Right cardiac atrium (tissue), 5 donors: ENCODE measurements at regions of chr4 and their contacts with region 1.

Region 1: DNA sequence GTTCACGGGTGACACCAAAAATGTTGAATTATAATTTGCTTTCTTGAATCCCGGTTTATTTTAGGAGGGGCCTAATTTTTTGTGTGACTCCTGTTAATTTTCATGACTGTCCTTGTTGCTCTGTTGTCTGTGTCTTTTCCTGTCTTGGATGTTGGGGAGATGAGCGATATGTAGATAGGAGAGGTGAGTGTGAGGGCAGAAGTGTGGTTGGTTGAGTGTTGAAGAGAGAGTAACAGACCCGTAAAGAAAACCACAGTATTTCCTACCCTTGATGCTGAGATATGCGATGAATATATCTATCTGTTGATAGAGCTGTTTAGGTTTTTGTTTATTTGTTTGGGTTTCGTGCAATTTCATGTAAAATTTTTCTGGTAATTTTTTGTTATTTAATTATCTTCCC is 70.5 kb downstream of the CPE start:
- DNase-seq: no peak
- ATAC-seq: no peak
- H3K4me3 ChIP-seq: no peak overlapping the region
- H3K27ac ChIP-seq: no peak overlapping the region
- H3K4me1 ChIP-seq: no peaks in the 10 kb centered on the region
- H3K27me3 ChIP-seq: no peaks in the 10 kb centered on the region

Region 2: DNA sequence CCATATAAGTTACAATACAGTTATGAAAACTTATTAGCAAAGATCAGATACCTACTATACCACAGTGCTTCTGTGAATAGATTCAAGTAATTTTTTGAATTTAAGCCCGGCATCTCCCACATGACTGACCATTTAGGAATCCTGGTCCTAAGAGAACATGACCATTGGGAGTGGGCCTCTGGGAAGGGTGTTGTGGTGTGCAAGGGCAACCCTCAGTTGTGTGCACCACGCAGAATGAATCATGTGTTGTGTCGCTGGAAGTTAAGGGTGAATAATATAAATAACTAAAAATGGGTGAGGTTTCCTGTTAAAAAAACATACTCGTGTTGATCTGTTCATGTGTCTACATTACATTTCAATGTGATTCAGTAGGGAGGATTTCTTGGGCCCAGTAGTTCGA is 55.1 kb before region 1 on chr4:
- intact Hi-C with region 1: loop called in 1 of 4 experiments (anchors 5 kb)
- DNase-seq: no peak
- ATAC-seq: no peak
- H3K4me3 ChIP-seq: no peak overlapping the region
- H3K27ac ChIP-seq: no peak overlapping the region
- H3K4me1 ChIP-seq: no peaks in the 10 kb centered on the region
- H3K27me3 ChIP-seq: no peaks in the 10 kb centered on the region

Region 3: DNA sequence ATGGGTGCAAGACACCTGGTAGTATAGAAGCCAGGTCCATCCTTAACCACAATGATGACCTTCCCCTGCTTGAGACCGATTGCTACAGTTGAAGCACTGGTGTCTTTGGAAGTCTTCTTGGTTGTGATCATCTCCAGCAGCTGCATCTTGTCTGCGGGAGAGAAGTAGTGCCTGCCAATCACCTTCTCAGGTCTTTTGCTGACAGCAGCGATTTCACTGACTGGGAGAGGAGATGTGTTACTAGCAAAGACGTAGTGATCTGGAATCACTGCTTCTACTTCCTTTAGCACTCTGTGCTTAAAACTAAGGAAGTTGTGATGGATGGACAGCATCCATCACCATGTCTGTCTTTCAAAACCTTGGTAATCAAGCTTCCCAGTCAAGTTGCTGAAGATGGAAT is 44.6 kb before region 1 on chr4:
- intact Hi-C with region 1: no loop called
- DNase-seq: no peak
- ATAC-seq: no peak
- H3K4me3 ChIP-seq: no peak overlapping the region
- H3K27ac ChIP-seq: no peak overlapping the region
- H3K4me1 ChIP-seq: no peaks in the 10 kb centered on the region
- H3K27me3 ChIP-seq: no peaks in the 10 kb centered on the region